KBM-7 (cell line): ENCODE measurements at regions of chr3 and their contacts with region 1.

Region 1: DNA sequence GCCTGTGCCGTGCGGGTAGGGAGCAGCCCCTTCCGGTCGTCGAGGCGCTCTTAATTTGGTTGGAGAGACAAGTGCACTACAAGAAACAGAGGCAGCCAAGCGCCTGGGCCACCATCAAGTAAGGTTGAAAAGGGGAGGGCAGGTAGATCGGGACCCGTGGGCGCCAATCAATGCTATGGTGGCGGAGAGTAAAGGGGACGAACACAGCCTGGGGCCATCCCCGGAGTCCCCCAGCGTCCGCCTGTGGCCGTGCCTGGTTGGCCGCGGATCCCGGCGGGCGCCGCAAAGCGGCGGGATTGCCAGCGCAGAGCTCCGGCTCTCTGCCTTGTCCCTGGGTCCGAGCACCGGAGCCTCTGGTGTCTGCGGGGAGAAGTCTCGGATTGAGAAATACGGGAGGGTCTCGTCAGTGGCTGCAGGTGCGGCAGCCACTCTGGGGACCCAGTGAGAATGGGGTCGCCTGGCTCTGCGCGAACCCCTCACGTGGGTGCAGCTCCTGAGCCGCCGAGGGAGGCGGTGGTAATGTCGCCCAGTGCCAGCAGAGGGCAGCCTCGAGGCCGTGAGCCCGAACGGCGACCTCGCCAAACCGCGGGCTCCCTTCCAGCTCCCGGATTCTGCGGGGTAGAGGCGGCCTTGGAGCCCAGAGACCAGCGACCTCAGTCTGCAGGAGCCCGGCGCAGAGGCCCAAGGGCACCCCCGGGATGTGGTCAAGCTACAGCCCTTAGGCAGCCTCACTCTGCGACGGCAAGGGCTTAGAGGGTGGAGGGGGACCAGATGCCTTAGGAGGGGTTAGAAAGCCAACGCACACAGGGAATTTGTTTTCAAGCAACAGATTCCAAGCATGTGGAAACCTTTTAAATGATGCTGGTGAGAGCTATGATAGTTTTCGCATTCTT is 10.8 kb downstream of the FOXL2 start:
- DNase-seq: peak; percentile 91

Region 2: DNA sequence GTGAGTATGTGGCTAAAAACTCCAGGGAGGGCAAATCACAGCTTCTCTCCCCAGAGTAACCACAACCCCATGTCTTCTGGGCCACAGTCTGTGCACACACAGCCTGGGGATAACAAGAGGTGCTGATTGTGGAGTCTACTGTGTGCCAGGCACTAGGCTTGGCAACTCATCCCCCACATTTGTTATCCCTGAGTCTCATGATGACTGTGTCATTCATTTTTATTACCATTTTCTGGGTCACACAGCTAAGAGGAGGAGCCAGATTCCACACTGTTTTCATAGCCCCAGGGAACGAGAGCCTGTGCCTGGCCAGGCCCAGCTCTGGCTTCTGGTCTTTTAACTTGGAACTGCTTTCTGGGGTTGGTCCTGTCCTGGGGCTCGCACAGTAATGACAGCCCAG is 467.2 kb before region 1 on chr3:
- in situ Hi-C with region 1: loop called (anchors 25 kb)
- DNase-seq: no peak

Region 3: DNA sequence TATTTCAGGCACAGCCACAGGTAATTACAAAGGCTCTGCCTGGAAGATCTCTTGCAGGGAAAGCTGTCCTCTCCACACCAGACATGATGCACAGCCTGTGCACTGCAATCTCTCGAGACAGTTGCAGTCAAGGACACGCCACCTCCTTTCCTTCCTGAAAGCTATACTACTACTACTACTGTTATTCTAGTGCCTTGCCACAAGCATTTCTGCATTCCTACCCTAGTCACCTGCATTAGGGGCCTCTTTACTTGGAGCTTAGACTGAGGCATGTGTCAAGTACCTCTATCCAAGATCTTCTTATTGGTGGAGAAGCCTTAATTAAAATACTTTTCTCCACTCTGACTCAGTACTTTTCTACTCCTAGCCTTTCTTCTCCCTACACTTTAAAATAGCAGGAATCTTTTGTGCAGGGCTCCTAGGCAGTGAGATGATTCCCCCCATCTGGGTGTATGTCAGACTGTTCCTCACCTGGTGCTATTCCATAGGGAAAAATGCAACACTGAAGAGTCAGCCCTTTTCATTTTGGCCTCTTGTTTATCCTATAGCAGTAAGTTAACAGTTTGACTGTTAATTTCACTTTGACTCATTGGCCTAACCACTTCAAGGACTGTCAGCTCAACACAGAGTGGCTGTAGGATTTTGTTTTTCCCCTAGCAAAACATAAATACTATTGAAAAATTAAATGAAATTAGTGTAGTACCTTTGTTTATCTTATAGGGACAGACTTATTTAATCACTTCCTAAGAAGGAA is 422.8 kb before region 1 on chr3:
- in situ Hi-C with region 1: no loop called
- DNase-seq: no peak